Activated CD4-positive, alpha-beta memory T cell treated with anti-CD3 and anti-CD28 coated beads for 36 hours (primary cell): ENCODE measurements at regions of chr2 and their contacts with region 1.

Region 1: GRCh38 chr2:8681786-8682692 is at the start of gene ID2:
- DNase-seq: peak; percentile 99
- H3K4me3 Mint-ChIP-seq: peak within 1 kb of the TSS; percentile 98
- H3K27ac Mint-ChIP-seq: peak within 1 kb of the TSS; percentile 95
- H3K4me1 Mint-ChIP-seq: peaks cover 35% of the 10 kb centered on the region
- H3K27me3 Mint-ChIP-seq: peaks cover 15% of the 10 kb centered on the region
- total RNA-seq, gene ID2: 182 to 193 TPM

Region 2: GRCh38 chr2:7437716-7438632 is 1244.1 kb before region 1 on chr2:
- CTCF ChIA-PET with region 1: no interaction called
- POLR2A ChIA-PET with region 1: interaction called, 8 read pairs
- intact Hi-C with region 1: loop called (anchors 2 kb)
- DNase-seq: peak; percentile 65
- H3K4me3 Mint-ChIP-seq: peak overlapping the region; percentile 29
- H3K27ac Mint-ChIP-seq: peak overlapping the region; percentile 91
- H3K4me1 Mint-ChIP-seq: peaks cover 74% of the 10 kb centered on the region
- H3K27me3 Mint-ChIP-seq: peaks cover 7% of the 10 kb centered on the region

Region 3: DNA sequence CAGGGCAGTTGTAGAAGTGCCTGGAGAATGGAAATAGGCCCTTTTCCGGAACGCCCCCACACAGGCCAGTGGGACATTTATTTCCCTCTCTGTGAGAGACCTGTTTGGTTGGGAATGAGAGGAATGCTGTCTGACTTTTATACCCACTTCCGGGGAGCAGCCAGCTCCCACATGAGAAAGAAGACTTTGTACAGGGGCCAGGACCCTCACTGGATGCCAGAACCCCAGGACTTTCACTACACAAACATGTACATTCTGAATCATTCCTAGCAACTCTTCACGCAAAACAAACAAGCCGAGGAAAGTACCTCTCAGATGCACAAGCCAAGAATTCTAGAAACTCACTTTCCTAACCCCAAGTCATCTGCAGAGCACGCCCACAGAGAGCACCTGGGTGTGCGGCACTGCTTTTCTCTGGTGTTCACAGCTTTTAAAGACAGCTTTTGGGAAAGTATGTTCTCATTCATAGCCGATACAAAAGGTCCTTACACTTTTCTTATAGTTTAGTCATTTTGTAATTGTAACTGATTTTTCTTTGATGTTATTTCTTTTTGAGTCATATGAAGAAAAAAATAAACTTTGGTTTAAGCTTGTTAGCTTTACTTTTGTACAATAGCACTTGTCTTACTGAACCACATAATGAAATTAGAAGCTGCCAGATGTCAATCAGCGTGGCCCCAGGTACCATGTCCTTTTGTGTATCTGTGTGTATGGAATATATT is 856.3 kb before region 1 on chr2:
- CTCF ChIA-PET with region 1: no interaction called
- POLR2A ChIA-PET with region 1: interaction called, 3 read pairs
- intact Hi-C with region 1: loop called (anchors 5 kb)
- DNase-seq: peak; percentile 87
- H3K4me3 Mint-ChIP-seq: no peak overlapping the region
- H3K27ac Mint-ChIP-seq: peak overlapping the region; percentile 89
- H3K4me1 Mint-ChIP-seq: peaks cover 34% of the 10 kb centered on the region
- H3K27me3 Mint-ChIP-seq: peaks cover 3% of the 10 kb centered on the region

Region 4: GRCh38 chr2:8090748-8091700 is 591.0 kb before region 1 on chr2:
- CTCF ChIA-PET with region 1: no interaction called
- POLR2A ChIA-PET with region 1: interaction called, 4 read pairs
- intact Hi-C with region 1: loop called (anchors 1 kb)
- DNase-seq: peak; percentile 90
- H3K4me3 Mint-ChIP-seq: no peak overlapping the region
- H3K27ac Mint-ChIP-seq: no peak overlapping the region
- H3K4me1 Mint-ChIP-seq: no peaks in the 10 kb centered on the region
- H3K27me3 Mint-ChIP-seq: no peaks in the 10 kb centered on the region

Region 5: DNA sequence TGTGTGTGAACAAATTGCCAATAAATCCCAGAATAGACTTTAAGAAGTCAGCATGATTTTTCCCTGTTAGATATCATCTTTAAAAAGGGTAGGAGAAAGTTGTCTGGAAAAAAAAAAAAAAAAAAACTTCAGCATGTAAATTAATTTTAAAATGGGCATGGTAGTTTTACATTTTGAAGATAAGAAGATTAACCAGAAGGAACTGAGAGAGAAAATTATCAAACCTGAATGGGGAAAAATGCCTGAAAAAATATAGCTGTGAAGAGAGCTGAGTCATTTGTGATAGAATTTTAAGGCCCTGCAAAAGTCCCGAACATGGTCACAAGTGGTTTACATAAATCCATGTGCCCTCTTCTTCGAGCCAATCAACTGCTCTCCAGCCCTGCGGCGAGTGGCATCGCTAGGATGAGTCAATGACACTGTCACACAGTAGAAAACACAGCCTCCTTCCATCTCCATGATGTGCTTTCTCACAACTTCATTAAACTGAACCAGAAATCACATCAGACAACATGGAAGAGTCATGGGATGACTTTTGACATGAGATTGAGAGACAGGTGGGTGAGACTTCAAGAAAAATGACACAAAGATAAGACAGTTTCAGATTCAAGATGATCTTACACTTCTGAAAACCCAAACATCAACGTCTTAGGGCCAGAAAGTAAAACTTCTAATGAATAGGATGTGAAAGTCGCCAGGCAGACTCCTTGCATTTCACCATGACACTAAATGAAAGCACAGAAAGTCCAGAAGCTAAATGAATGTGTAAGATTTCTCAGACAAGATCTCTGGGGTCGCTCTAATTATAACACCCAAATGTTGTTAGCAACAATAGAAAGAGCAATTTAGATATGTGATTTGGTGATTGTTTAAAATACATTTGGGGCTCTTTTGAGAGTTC is 273.2 kb before region 1 on chr2:
- CTCF ChIA-PET with region 1: interaction called, 3 read pairs
- POLR2A ChIA-PET with region 1: interaction called, 18 read pairs
- intact Hi-C with region 1: loop called (anchors 1 kb)
- DNase-seq: peak; percentile 91
- H3K4me3 Mint-ChIP-seq: peak overlapping the region; percentile 0
- H3K27ac Mint-ChIP-seq: peak overlapping the region; percentile 79
- H3K4me1 Mint-ChIP-seq: peaks cover 34% of the 10 kb centered on the region
- H3K27me3 Mint-ChIP-seq: no peaks in the 10 kb centered on the region

Region 6: DNA sequence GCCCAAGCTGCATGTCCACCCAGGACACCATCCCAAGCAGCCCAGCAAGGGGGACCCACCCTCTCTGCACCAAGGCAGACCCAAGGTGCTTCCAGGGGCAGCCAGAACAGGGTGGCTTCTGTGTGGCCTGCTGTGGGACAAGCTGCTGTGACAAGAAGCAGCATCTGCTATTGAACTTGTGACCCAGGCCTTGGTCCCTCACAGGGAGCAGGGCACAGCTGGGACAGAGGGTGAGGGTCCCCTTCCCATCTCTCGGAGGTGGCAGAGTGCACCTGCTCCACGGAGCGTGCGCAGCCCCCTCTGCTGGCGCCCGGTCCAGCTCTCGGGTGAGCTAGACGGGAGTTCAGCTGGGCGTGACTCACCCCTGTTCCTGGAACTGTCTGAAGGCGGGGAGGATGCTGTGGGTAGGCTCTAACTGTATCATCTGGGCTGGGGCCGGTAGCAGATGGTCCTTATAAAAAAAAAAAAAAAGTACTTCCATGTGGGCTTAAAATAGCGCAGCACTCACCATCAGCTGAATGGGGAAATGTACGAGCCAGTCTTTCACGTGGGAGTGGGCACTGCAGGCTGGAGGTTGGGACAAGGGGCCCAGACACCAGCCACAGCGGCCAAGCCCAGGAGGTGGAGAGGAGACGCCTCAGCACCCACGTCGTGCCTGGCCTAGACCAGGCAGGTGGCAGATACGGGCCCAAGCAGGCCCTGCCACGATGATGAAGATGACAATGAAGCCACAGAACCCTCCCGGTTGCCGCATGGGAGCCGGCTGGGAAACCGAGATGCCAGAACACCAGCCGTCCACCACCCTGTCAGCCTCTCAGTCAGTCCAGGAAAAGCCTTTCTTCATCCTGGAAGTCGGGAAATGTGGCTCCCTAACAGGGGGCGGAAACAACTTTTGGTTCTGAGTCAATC is 137.0 kb before region 1 on chr2:
- CTCF ChIA-PET with region 1: interaction called, 38 read pairs
- POLR2A ChIA-PET with region 1: interaction called, 124 read pairs
- intact Hi-C with region 1: loop called (anchors 1 kb)
- DNase-seq: peak; percentile 96
- H3K4me3 Mint-ChIP-seq: peak overlapping the region; percentile 52
- H3K27ac Mint-ChIP-seq: peak overlapping the region; percentile 100
- H3K4me1 Mint-ChIP-seq: peaks cover 72% of the 10 kb centered on the region
- H3K27me3 Mint-ChIP-seq: no peaks in the 10 kb centered on the region

Region 7: DNA sequence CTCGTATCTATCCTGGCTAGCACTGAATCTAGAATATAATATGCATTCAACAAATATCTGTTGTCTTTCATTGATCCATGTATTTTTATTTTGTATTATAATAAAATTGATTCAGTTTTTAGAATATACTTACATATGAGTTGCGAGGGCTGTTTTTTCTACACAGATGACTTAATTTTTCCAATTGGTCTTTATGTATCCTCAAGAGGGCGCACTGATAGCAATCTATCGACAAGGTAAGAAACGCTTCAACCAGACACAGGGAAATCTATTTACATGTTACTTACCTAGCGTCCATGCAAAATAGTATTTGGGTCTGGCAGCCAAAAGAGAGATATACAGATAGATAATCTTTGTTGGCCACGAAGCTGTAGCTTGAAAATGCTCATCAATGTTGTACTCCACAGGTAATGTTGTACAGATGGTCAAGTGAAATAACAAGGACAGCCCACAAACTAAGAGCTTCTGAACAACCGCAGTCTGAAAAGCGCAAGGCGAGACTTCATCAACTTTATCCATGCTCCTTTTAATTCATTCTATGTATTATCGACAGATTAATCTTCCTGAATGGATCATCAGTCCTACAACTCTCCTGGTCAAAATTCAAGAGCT is 190.9 kb after region 1 on chr2:
- CTCF ChIA-PET with region 1: no interaction called
- POLR2A ChIA-PET with region 1: no interaction called
- intact Hi-C with region 1: no loop called
- DNase-seq: no peak
- H3K4me3 Mint-ChIP-seq: no peak overlapping the region
- H3K27ac Mint-ChIP-seq: no peak overlapping the region
- H3K4me1 Mint-ChIP-seq: no peaks in the 10 kb centered on the region
- H3K27me3 Mint-ChIP-seq: peaks cover 3% of the 10 kb centered on the region